ENCODE measurements at regions of chr7 and their contacts with region 1.

Region 1: GRCh38 chr7:69588773-69589172 is 9.5 kb upstream of the AUTS2 start:
- DNase-seq: no peak

Region 2: GRCh38 chr7:68088879-68089278 is 1499.9 kb before region 1 on chr7:
- intact Hi-C with region 1: loop called in 1 of 2 experiments (anchors 5 kb)
- DNase-seq: no peak

Region 3: GRCh38 chr7:69012149-69012548 is 576.6 kb before region 1 on chr7:
- intact Hi-C with region 1: no loop called
- DNase-seq: no peak

Region 4: DNA sequence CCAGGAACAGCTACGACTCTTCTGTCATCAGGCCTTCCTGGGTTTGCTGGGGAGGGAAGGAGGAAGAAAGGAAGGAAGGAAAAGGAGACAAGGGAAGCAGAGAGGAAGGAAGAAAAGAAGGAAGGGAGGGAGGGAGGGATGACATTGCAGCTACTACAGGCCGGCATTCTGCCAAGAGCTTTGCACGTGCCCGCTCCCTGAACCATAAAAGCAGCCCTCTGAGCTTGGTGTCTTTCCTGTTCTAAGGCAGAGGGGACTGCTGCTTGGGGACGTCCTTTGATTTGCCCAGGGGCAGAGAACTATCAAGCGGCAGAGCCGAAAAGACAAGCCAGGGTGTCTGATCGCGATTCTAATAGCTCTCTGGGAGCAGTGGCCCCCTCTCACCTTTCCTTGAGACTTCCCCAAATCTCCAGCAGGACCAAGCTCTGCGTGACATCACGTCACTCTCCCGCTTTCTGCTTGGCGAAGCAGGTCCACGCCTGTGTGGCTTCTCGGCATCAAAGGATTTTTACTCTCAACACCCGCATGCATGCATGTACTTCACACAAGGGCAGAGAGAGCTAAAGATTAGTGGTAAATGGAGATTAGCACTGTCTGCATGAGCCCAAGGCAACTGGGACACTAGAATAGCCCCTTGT is 158.3 kb before region 1 on chr7:
- intact Hi-C with region 1: loop called in 1 of 2 experiments (anchors 10 kb)
- DNase-seq: peak; percentile 84

Measured in posterior vena cava (tissue), 2 donors.